Activated naive CD4-positive, alpha-beta T cell treated with anti-CD3 and anti-CD28 coated beads for 36 hours (primary cell): ENCODE measurements at regions of chr18 and their contacts with region 1.

Region 1: DNA sequence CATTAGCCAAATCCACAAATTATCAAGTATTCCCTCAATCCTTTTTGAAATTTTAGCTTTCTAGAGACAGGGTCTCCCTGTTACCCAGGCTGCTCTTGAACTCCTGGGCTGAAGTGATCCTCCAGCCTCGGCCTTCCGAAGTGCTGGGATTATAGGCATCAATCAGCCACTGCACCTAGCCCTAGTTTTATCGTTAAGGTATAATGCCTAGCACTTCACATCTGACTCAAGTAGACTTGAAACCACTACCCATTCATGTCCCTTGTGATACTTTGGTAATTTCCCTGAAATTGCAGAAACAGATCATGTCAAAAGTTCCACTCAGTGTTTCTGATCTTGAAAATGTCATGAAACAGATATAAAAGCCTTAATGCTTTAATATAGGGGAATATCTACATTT is 26.3 kb downstream of the MEX3C start:
- DNase-seq: no peak
- H3K4me3 Mint-ChIP-seq: peak overlapping the region; percentile 52
- H3K27ac Mint-ChIP-seq: peak overlapping the region; percentile 97
- H3K4me1 Mint-ChIP-seq: peaks cover 67% of the 10 kb centered on the region
- H3K27me3 Mint-ChIP-seq: no peaks in the 10 kb centered on the region

Region 2: GRCh38 chr18:50973367-50974126 is 197.7 kb before region 1 on chr18:
- CTCF ChIA-PET with region 1: no interaction called
- intact Hi-C with region 1: loop called (anchors 1 kb)
- DNase-seq: peak; percentile 48
- H3K4me3 Mint-ChIP-seq: no peak overlapping the region
- H3K27ac Mint-ChIP-seq: peak overlapping the region; percentile 76
- H3K4me1 Mint-ChIP-seq: peaks cover 33% of the 10 kb centered on the region
- H3K27me3 Mint-ChIP-seq: no peaks in the 10 kb centered on the region

Region 3: GRCh38 chr18:51153659-51154371 is 17.4 kb before region 1 on chr18:
- CTCF ChIA-PET with region 1: interaction called, 7 read pairs
- intact Hi-C with region 1: loop called (anchors 1 kb)
- DNase-seq: peak; percentile 70
- H3K4me3 Mint-ChIP-seq: peak overlapping the region; percentile 79
- H3K27ac Mint-ChIP-seq: peak overlapping the region; percentile 99
- H3K4me1 Mint-ChIP-seq: peaks cover 58% of the 10 kb centered on the region
- H3K27me3 Mint-ChIP-seq: no peaks in the 10 kb centered on the region

Region 4: GRCh38 chr18:51188024-51188701 is 16.9 kb after region 1 on chr18:
- CTCF ChIA-PET with region 1: interaction called, 3 read pairs
- intact Hi-C with region 1: loop called (anchors 1 kb)
- DNase-seq: no peak
- H3K4me3 Mint-ChIP-seq: peak overlapping the region; percentile 39
- H3K27ac Mint-ChIP-seq: peak overlapping the region; percentile 46
- H3K4me1 Mint-ChIP-seq: peaks cover 76% of the 10 kb centered on the region
- H3K27me3 Mint-ChIP-seq: no peaks in the 10 kb centered on the region

Region 5: GRCh38 chr18:51235011-51235789 is 64.0 kb after region 1 on chr18:
- CTCF ChIA-PET with region 1: no interaction called
- intact Hi-C with region 1: loop called (anchors 1 kb)
- DNase-seq: peak; percentile 74
- H3K4me3 Mint-ChIP-seq: no peak overlapping the region
- H3K27ac Mint-ChIP-seq: peak overlapping the region; percentile 68
- H3K4me1 Mint-ChIP-seq: peaks cover 20% of the 10 kb centered on the region
- H3K27me3 Mint-ChIP-seq: peaks cover 7% of the 10 kb centered on the region